ENCODE measurements at regions of chr2 and their contacts with region 1.

Region 1: DNA sequence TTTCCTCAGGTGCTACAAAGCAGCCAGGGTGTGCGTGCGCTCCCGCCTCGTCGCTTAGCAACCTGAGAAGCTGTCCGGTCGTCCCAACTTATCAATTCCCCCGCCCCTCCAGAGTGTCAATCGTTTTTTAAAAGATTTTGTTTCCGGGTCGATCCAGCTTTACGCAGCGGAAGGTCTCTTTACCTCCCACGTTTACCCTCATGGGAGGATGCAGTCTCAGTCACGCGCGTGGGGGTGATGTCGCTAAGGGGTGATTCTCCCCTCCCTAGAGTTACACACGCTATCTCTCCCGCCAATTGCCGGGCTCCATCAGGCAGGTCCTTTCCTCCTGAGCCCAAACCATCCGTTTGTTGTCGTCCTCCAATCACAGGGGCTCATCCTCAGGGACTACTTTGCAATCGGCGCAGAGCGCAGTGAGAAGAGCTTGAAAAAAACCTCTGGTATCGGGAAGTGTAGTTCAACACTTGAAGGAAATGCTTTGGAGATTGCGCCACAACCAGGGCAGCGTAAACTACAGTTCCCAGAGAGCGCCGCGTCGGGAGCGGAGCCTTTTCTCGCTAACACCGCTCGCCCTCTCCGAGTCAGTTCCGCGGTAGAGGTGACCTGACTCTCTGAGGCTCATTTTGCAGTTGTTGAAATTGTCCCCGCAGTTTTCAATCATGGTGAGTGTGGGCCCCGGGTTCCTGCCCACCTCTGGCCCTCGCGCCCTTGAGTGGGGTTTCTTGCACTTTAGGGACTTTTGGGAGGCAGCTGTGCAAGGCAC is at the starts of genes MDH1 and WDPCP:
- DNase-seq: peak; percentile 99
- ATAC-seq: peak; percentile 87
- H3K4me3 ChIP-seq: peak within 1 kb of the TSS; percentile 82
- H3K27ac ChIP-seq: peak within 1 kb of the TSS; percentile 73
- H3K4me1 ChIP-seq: peaks cover 29% of the 10 kb centered on the region
- H3K27me3 ChIP-seq: no peaks in the 10 kb centered on the region
- CTCF ChIP-seq: no peak
- total RNA-seq, gene MDH1: 249 and 304 TPM in 2 replicates
- total RNA-seq, gene WDPCP: 4.0 and 6.3 TPM in 2 replicates

Region 2: GRCh38 chr2:63189026-63189425 is 399.5 kb before region 1 on chr2:
- CTCF ChIA-PET with region 1: no interaction called
- POLR2A ChIA-PET with region 1: no interaction called
- intact Hi-C with region 1: no loop called
- DNase-seq: peak; percentile 68
- ATAC-seq: peak; percentile 60
- H3K4me3 ChIP-seq: peak overlapping the region; percentile 31
- H3K27ac ChIP-seq: no peak overlapping the region
- H3K4me1 ChIP-seq: no peaks in the 10 kb centered on the region
- H3K27me3 ChIP-seq: no peaks in the 10 kb centered on the region
- CTCF ChIP-seq: peak; percentile 85

Region 3: GRCh38 chr2:63553049-63553448 is 35.5 kb before region 1 on chr2:
- CTCF ChIA-PET with region 1: no interaction called
- POLR2A ChIA-PET with region 1: no interaction called
- intact Hi-C with region 1: loop called (anchors 1 kb)
- DNase-seq: peak; percentile 69
- ATAC-seq: peak; percentile 81
- H3K4me3 ChIP-seq: peak overlapping the region; percentile 7; the same call in 1 of the 2 replicates
- H3K27ac ChIP-seq: 0 out of 2 replicates have a peak overlapping the region, but pooled peaks have one; percentile 21
- H3K4me1 ChIP-seq: peaks cover 31% of the 10 kb centered on the region
- H3K27me3 ChIP-seq: no peaks in the 10 kb centered on the region
- CTCF ChIP-seq: no peak

Region 4: GRCh38 chr2:63614983-63615945 is 26.7 kb after region 1 on chr2:
- CTCF ChIA-PET with region 1: no interaction called
- POLR2A ChIA-PET with region 1: interaction called, 3 read pairs
- intact Hi-C with region 1: loop called (anchors 2 kb)
- DNase-seq: peak; percentile 89
- ATAC-seq: peak; percentile 90
- H3K4me3 ChIP-seq: peak overlapping the region; percentile 45
- H3K27ac ChIP-seq: peak overlapping the region; percentile 75
- H3K4me1 ChIP-seq: peaks cover 33% of the 10 kb centered on the region
- H3K27me3 ChIP-seq: no peaks in the 10 kb centered on the region
- CTCF ChIP-seq: no peak

Region 5: GRCh38 chr2:63667132-63667700 is 78.7 kb after region 1 on chr2:
- CTCF ChIA-PET with region 1: no interaction called
- POLR2A ChIA-PET with region 1: no interaction called
- intact Hi-C with region 1: no loop called
- DNase-seq: peak; percentile 50
- ATAC-seq: peak; percentile 43; the same call in 1 of the 2 replicates
- H3K4me3 ChIP-seq: no peak overlapping the region
- H3K27ac ChIP-seq: no peak overlapping the region
- H3K4me1 ChIP-seq: 0 out of 2 replicates have a peak, but pooled peaks cover 6% of the 10 kb centered on the region
- H3K27me3 ChIP-seq: no peaks in the 10 kb centered on the region
- CTCF ChIP-seq: no peak

Measured in PC-3 (cell line).